ENCODE measurements at regions of chr11 and their contacts with region 1.

Region 1: GRCh38 chr11:77994412-77995362 is at the start of gene INTS4:
- DNase-seq: peak; percentile 99
- H3K4me3 Mint-ChIP-seq: peak within 1 kb of the TSS; percentile 89
- H3K27ac Mint-ChIP-seq: peak within 1 kb of the TSS; percentile 93
- H3K4me1 Mint-ChIP-seq: peaks cover 27% of the 10 kb centered on the region
- H3K27me3 Mint-ChIP-seq: no peaks in the 10 kb centered on the region
- total RNA-seq, gene INTS4: 53.5 to 55.3 TPM

Region 2: GRCh38 chr11:77637345-77638165 is 357.1 kb before region 1 on chr11 and contains the start of gene CLNS1A:
- CTCF ChIA-PET with region 1: interaction called, 5 read pairs
- POLR2A ChIA-PET with region 1: interaction called, 4 read pairs
- intact Hi-C with region 1: loop called (anchors 2 kb)
- DNase-seq: peak; percentile 90
- H3K4me3 Mint-ChIP-seq: peak within 1 kb of the TSS; percentile 95
- H3K27ac Mint-ChIP-seq: peak within 1 kb of the TSS; percentile 95
- H3K4me1 Mint-ChIP-seq: peaks cover 35% of the 10 kb centered on the region
- H3K27me3 Mint-ChIP-seq: no peaks in the 10 kb centered on the region
- total RNA-seq, gene CLNS1A: 199 to 200 TPM

Region 3: DNA sequence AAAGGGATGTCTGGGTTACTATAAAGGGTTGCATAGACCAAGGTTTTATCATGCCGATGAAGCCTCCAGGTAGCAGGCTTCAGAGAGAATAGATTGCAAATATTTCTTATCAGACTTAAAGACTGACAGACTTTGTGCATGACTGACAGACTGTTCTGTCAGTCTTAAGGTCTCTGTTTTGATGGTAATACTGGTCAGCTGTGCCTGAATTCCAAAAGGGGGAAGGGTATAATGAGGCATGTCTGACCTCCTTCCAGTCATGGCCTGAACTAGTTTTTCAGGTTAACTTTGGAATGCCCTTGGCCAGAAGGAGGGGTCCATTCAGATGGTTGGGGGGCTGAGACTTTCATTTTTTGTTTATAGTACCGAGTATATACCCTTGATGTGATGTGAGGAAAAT is 33.1 kb after region 1 on chr11:
- CTCF ChIA-PET with region 1: no interaction called
- POLR2A ChIA-PET with region 1: no interaction called
- intact Hi-C with region 1: no loop called
- DNase-seq: no peak
- H3K4me3 Mint-ChIP-seq: no peak overlapping the region
- H3K27ac Mint-ChIP-seq: no peak overlapping the region
- H3K4me1 Mint-ChIP-seq: no peaks in the 10 kb centered on the region
- H3K27me3 Mint-ChIP-seq: peaks cover 1% of the 10 kb centered on the region

Region 4: DNA sequence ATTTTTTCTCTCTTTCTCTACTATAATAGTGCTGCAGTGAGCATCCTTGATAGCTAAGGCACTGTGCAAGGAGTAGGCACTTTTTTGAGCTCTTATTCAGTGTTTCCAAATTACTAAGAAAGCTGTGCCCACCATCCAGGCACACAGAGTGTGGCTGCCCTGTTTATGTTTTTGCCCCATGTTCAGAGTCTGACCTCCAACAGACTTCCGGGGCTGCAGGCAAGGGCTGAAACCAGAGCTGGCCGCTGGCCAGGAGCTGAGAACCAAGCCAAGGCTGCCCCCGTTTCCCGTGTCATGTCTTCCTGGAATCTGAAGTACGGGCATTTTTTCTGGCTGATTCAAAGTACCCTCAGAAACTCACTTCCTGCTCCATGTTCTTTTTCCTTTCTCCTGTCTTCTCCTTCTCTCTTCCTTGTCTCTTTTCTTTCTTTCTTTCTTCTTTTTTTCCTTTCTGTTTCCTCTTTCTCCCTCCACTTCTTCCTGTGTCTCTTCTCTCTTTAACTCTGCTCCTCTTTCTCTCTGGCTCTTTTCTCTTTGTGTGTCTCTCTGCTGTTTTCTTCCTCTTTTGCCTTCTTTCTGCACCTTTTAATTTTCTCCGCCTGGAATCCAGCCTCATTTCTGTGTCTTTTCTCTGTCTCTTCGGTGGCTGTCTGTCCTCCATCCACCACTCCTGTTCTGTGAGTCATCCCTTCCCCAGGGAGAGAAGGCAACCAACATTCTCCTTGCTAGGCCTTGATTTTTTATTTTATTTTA is 45.4 kb after region 1 on chr11:
- CTCF ChIA-PET with region 1: interaction called, 19 read pairs
- POLR2A ChIA-PET with region 1: interaction called, 11 read pairs
- intact Hi-C with region 1: loop called (anchors 1 kb)
- DNase-seq: peak; percentile 68
- H3K4me3 Mint-ChIP-seq: peak overlapping the region; percentile 6
- H3K27ac Mint-ChIP-seq: peak overlapping the region; percentile 80
- H3K4me1 Mint-ChIP-seq: peaks cover 12% of the 10 kb centered on the region
- H3K27me3 Mint-ChIP-seq: no peaks in the 10 kb centered on the region

Region 5: DNA sequence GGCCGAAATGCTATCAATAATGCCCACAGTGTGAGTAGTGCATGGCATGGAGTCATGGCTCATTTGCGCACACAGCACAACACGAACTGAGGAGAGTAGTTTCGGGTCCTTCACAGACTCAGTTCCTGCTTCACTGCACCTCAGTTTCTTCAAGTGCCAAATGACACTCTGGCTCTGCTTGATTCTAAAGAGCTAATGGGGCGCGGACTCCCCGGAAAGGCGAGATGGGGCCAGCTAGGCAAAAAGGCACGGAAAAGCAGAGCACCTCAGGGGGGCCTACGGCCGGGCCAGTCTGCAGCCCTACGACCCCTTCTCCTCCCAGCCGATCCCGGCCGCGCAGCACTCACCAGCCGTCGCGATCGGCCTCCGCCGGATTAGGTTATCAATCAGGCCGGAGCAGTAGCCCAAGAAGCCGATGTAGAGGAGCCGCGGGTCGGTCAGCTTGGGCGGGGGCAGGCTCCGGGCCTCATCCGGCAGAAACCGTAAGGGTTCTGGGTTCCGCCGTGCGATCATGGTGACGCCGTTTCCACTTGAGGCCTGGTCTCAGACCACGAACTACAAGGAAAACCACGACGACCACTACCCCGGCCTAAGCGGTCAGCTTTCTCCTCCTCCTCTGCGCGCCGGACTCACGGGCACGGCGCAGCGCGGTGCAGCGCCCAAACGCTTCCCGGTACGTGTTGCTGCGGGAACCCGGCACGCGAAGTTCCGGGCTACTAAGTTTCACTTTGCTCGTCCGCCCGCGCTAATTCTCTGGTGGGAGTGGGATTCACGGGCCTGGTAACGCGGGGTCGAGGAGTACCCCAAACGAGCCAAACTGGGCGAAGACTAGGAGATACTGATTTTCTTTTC is 84.8 kb after region 1 on chr11 and contains the start of gene NDUFC2:
- CTCF ChIA-PET with region 1: interaction called, 5 read pairs
- POLR2A ChIA-PET with region 1: interaction called, 5 read pairs
- intact Hi-C with region 1: loop called (anchors 1 kb)
- DNase-seq: peak; percentile 77
- H3K4me3 Mint-ChIP-seq: peak within 1 kb of the TSS; percentile 91
- H3K27ac Mint-ChIP-seq: peak within 1 kb of the TSS; percentile 83
- H3K4me1 Mint-ChIP-seq: peaks cover 40% of the 10 kb centered on the region
- H3K27me3 Mint-ChIP-seq: no peaks in the 10 kb centered on the region
- total RNA-seq, gene NDUFC2: 209 to 230 TPM

Region 6: DNA sequence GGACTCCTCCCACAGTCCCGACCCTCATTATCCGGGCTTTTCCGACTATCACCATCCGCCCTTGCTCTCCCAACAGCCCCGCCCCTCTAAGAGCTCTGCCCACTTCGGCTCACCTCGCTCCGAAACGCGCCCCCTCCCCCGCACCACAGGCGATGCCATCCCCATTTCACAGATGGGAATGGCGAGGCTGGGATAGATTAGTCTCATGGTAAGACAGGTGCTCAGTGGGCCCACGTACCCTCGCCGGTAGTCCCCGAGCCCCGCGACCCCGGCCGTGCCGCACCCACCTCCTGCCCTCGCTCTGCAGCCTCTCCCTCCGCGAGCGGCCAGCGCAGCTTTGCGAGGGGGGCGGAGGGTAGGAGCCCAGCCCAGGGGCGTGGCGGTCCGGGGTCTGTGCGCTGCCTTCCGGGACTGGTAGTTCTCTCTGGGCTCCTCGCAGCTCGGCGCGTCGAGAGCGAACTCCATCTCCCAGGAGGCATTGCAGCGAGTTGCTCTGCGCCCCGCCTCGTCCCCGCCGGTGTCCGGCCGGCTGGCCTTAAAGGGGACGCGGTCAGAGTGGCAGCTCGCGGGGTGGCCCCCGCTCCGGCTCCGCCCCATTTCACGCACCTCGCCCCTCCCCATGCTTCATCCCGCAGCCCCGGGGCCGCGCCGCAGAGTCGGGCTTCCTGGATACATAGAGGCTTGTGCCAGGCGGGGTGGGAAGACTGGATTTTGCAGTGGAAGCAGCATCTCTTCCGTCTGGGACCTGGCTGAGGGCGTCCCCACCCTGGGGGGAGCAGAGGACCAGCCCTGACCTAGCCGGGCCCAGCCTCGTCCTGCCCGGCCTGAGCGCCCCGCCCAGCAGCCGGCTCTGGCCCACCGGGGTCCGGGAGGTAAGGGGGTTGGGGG is 193.8 kb after region 1 on chr11 and contains the starts of genes KCTD21 and USP35:
- CTCF ChIA-PET with region 1: no interaction called
- POLR2A ChIA-PET with region 1: interaction called, 6 read pairs
- intact Hi-C with region 1: loop called (anchors 1 kb)
- DNase-seq: peak; percentile 95
- H3K4me3 Mint-ChIP-seq: peak within 1 kb of the TSS; percentile 98
- H3K27ac Mint-ChIP-seq: peak within 1 kb of the TSS; percentile 98
- H3K4me1 Mint-ChIP-seq: peaks cover 57% of the 10 kb centered on the region
- H3K27me3 Mint-ChIP-seq: no peaks in the 10 kb centered on the region
- total RNA-seq, gene KCTD21: 7.9 to 8.8 TPM
- total RNA-seq, gene USP35: 9.3 to 9.6 TPM

Region 7: DNA sequence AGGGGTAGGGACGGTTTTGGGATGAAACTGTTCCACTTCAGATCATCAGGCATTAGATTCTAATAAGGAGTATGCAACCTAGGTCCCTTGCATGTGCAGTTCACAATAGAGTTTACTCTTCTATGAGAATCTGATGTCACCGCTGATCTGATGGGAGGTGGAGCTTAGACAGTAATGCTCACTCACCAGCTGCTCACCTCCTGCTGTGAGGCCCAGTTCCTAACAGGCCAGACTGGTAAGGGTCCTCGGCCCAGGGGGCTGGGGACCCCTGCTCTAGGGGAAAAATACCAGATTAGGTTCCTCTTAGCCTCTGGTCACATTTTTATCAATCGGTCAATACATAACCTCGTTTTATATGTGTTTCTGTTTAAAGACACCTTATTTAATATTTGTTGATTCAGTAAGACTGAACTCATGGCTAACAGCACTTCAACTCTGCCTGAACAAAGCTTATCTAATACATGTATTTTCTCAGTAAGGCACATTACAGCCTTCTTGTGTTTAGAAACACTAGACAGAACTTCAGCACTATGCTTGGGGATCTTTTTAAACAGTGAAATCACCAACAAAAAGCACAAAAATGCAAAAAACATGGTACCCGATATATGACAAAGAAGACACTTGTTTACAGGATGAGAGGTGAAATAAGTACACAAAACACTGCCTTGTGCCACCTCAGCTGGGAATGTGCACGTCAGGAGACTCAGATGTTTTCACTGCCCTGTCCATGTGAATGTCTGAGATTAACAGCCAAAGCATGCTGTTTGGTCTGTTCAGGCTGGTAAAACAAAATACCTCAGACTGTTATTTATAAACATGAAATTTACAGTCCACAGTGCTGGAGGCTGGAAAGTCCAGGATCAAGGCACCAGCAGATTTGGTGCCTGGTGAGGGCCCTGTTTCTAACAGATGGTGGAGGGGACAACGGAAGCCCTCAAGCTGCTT is 301.6 kb after region 1 on chr11:
- CTCF ChIA-PET with region 1: no interaction called
- POLR2A ChIA-PET with region 1: no interaction called
- intact Hi-C with region 1: no loop called
- DNase-seq: no peak
- H3K4me3 Mint-ChIP-seq: no peak overlapping the region
- H3K27ac Mint-ChIP-seq: no peak overlapping the region
- H3K4me1 Mint-ChIP-seq: peaks cover 33% of the 10 kb centered on the region
- H3K27me3 Mint-ChIP-seq: no peaks in the 10 kb centered on the region